ENCODE measurements at regions of chr15 and their contacts with region 1.

Region 1: GRCh38 chr15:31302778-31303725 is 23.6 kb upstream of the KLF13 start:
- DNase-seq: peak in 1 of 2 experiments; percentile 59
- H3K4me3 ChIP-seq: no peak overlapping the region
- H3K27ac ChIP-seq: no peak overlapping the region
- H3K4me1 ChIP-seq: peaks cover 9 to 49% (median 41%) of the 10 kb centered on the region in 4 experiments
- H3K27me3 ChIP-seq: peaks cover 0 to 2% (median 0%) of the 10 kb centered on the region in 4 experiments; a peak in 1 of 7 replicates
- CTCF ChIP-seq: peak; percentile 15 to 39 (median 22); a peak in 3 of 4 replicates
- EP300 ChIP-seq: no peak
- POLR2A ChIP-seq: no peak
- RAD21 ChIP-seq: peak in 1 of 2 experiments; percentile 29; a peak in 1 of 4 replicates

Region 2: GRCh38 chr15:31292391-31293015 is 10.5 kb before region 1 on chr15:
- CTCF ChIA-PET with region 1: interaction called, 13 read pairs
- POLR2A ChIA-PET with region 1: no interaction called
- DNase-seq: peak in 1 of 2 experiments; percentile 29
- H3K4me3 ChIP-seq: no peak overlapping the region
- H3K27ac ChIP-seq: no peak overlapping the region
- H3K4me1 ChIP-seq: peaks cover 2 to 13% (median 9%) of the 10 kb centered on the region in 4 experiments
- H3K27me3 ChIP-seq: no peaks in the 10 kb centered on the region; a peak in 1 of 7 replicates
- CTCF ChIP-seq: no peak
- EP300 ChIP-seq: no peak
- POLR2A ChIP-seq: no peak
- RAD21 ChIP-seq: no peak

Region 3: DNA sequence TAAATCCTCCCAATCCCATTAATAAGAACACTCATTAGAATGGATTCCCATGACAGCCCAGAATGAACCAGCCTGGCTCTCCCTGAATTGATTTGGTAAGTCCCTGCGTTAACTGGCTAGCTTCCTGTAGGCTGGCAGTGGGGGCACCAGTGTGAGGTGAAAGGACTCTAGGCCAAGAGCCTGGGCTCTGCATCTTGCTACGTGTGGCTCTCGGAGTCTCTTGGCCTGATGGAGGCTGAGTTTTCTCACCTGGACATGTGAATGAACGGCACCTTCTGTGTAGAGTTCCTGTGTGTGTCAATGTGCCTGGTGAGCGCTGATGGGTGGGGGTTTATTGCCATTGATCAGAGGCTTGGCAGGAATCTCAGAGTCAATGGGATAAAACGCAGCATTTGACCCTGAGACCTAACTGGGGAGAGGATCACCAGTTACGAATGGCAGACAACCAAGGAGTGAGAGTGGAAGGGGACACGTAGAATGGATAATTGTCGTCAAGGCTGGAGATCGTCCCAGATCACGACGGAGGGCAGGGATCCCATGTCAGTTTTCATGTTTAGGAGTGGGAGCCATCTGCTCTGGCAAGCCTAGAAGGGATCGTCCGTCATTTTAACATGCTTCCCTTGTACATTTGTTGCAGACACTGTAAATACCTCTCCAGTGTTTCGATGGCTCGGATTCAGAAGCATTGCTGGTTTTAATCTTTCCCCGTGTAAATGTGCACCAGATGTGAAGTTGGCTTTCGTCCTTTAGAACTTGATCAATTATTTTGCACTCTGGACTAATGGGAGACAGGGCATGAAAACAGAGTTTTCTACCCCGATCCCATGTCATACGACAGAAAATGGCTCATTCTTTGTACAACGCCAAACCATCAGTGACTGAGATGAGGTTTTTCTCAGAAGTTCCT is 14.6 kb after region 1 on chr15:
- CTCF ChIA-PET with region 1: interaction called, 9 read pairs
- POLR2A ChIA-PET with region 1: interaction called, 21 read pairs
- DNase-seq: no peak
- H3K4me3 ChIP-seq: no peak overlapping the region
- H3K27ac ChIP-seq: no peak overlapping the region
- H3K4me1 ChIP-seq: peaks cover 0 to 9% (median 4%) of the 10 kb centered on the region in 4 experiments; a peak in 5 of 7 replicates
- H3K27me3 ChIP-seq: no peaks in the 10 kb centered on the region
- CTCF ChIP-seq: no peak
- EP300 ChIP-seq: no peak
- POLR2A ChIP-seq: no peak
- RAD21 ChIP-seq: no peak

Region 4: GRCh38 chr15:32130823-32131222 is 827.8 kb after region 1 on chr15:
- CTCF ChIA-PET with region 1: no interaction called
- POLR2A ChIA-PET with region 1: no interaction called
- DNase-seq: no peak
- H3K4me3 ChIP-seq: no peak overlapping the region
- H3K27ac ChIP-seq: no peak overlapping the region
- H3K4me1 ChIP-seq: no peaks in the 10 kb centered on the region
- H3K27me3 ChIP-seq: no peaks in the 10 kb centered on the region
- CTCF ChIP-seq: peak in 1 of 3 experiments; percentile 15; a peak in 2 of 4 replicates
- EP300 ChIP-seq: no peak
- POLR2A ChIP-seq: no peak
- RAD21 ChIP-seq: no peak